ENCODE measurements at regions of chr1 and their contacts with region 1.

Region 1: DNA sequence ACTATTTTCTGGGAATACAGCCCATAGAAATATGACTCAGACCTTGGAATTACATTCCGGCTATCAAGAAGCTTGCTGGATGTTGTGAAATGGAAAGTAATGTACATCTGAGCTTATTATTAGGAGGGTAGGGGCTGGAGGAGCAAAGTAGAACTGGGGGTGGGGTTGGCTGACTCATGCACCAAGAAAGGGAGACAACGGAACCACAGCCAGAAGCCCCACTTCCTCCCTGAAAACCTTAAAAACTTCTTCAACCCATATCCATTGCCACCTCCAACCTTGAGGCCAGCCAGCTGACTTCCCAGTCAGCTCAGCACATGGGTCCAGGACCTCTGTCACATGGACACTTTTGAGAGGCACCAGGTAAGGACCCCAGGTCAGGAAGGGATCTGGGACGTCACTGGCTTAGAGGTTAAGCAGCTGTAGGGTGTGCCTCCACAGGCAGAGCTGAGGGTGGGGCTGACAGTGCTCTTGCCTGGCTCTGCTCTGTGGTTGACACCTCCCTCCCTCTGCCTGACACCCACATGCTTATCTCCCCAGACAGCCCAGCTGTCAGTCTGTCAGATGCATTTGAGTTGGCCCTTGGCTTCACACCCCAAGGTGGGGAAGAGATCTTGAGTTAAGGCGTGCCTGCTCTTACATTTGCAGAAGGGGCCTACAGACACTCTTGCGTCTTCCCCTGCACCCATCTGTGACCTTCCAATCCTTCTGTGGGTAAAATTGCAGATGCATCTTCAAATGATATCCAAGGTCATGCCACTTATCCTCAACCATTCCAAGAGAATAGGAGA is 5.7 kb upstream of the ZNF683 start:
- DNase-seq: peak; percentile 86 to 95 (median 90)
- H3K4me3 ChIP-seq: peak overlapping the region in 1 of 2 donors; percentile 32
- H3K4me3 Mint-ChIP-seq: peak overlapping the region; percentile 55 to 87 (median 74)
- H3K27ac ChIP-seq: peak overlapping the region; percentile 53
- H3K27ac Mint-ChIP-seq: peak overlapping the region; percentile 84 to 99 (median 96)
- H3K4me1 ChIP-seq: peaks cover 82% of the 10 kb centered on the region
- H3K4me1 Mint-ChIP-seq: peaks cover 53 to 92% (median 69%) of the 10 kb centered on the region in 4 donors
- H3K27me3 ChIP-seq: no peaks in the 10 kb centered on the region
- H3K27me3 Mint-ChIP-seq: no peaks in the 10 kb centered on the region

Region 2: GRCh38 chr1:26284597-26285360 is 93.5 kb before region 1 on chr1:
- CTCF ChIA-PET with region 1: interaction called, 33 read pairs
- POLR2A ChIA-PET with region 1: interaction called, 136 read pairs
- intact Hi-C with region 1: no loop called
- DNase-seq: peak; percentile 91 to 99 (median 92)
- H3K4me3 ChIP-seq: peak overlapping the region; percentile 38 to 50
- H3K4me3 Mint-ChIP-seq: peak overlapping the region; percentile 82 to 94 (median 89)
- H3K27ac ChIP-seq: peak overlapping the region; percentile 91
- H3K27ac Mint-ChIP-seq: peak overlapping the region; percentile 94 to 100 (median 99)
- H3K4me1 ChIP-seq: peaks cover 95% of the 10 kb centered on the region
- H3K4me1 Mint-ChIP-seq: peaks cover 63 to 96% (median 81%) of the 10 kb centered on the region in 4 donors
- H3K27me3 ChIP-seq: no peaks in the 10 kb centered on the region
- H3K27me3 Mint-ChIP-seq: no peaks in the 10 kb centered on the region

Region 3: GRCh38 chr1:26321315-26322041 is 56.8 kb before region 1 on chr1:
- CTCF ChIA-PET with region 1: interaction called, 23 read pairs
- POLR2A ChIA-PET with region 1: interaction called, 111 read pairs
- intact Hi-C with region 1: loop called (anchors 1 kb)
- DNase-seq: peak; percentile 88 to 95 (median 91)
- H3K4me3 ChIP-seq: peak overlapping the region in 1 of 2 donors; percentile 94
- H3K4me3 Mint-ChIP-seq: peak overlapping the region; percentile 91 to 100 (median 96)
- H3K27ac ChIP-seq: peak overlapping the region; percentile 69
- H3K27ac Mint-ChIP-seq: peak overlapping the region; percentile 83 to 99 (median 95)
- H3K4me1 ChIP-seq: peaks cover 48% of the 10 kb centered on the region
- H3K4me1 Mint-ChIP-seq: peaks cover 30 to 64% (median 47%) of the 10 kb centered on the region in 4 donors
- H3K27me3 ChIP-seq: no peaks in the 10 kb centered on the region
- H3K27me3 Mint-ChIP-seq: no peaks in the 10 kb centered on the region

Region 4: GRCh38 chr1:26358411-26359384 is 19.6 kb before region 1 on chr1:
- CTCF ChIA-PET with region 1: interaction called, 195 read pairs
- POLR2A ChIA-PET with region 1: interaction called, 174 read pairs
- intact Hi-C with region 1: loop called (anchors 1 kb)
- DNase-seq: peak; percentile 79 to 95 (median 81)
- H3K4me3 ChIP-seq: peak overlapping the region in 1 of 2 donors; percentile 44
- H3K4me3 Mint-ChIP-seq: peak overlapping the region; percentile 58 to 88 (median 74)
- H3K27ac ChIP-seq: peak overlapping the region; percentile 40
- H3K27ac Mint-ChIP-seq: peak overlapping the region; percentile 79 to 97 (median 94)
- H3K4me1 ChIP-seq: peaks cover 56% of the 10 kb centered on the region
- H3K4me1 Mint-ChIP-seq: peaks cover 27 to 70% (median 41%) of the 10 kb centered on the region in 4 donors
- H3K27me3 ChIP-seq: no peaks in the 10 kb centered on the region
- H3K27me3 Mint-ChIP-seq: no peaks in the 10 kb centered on the region

Region 5: DNA sequence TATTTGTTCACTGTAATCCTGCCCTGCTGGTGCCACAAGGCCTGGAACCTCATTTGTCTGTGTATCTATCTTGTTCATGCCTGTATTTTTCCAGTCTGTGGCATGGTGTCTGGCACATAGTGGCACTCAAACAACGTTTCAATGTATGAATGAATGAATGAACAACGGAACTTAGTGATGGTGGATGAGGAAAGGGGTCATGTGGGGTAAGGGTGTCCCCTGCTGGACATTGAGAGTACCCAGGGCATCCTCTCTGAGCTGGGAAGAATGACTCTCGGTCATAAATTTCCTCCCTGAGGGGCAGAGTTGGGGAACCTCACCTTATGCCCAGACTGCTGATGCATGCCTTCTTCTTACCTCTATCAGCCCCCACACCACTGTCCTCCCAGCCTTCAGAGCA is 13.2 kb after region 1 on chr1:
- CTCF ChIA-PET with region 1: interaction called, 73 read pairs
- POLR2A ChIA-PET with region 1: interaction called, 54 read pairs
- intact Hi-C with region 1: loop called (anchors 1 kb)
- DNase-seq: peak; percentile 52 to 63 (median 56)
- H3K4me3 ChIP-seq: no peak overlapping the region
- H3K4me3 Mint-ChIP-seq: peak overlapping the region in 2 of 8 donors; percentile 1 to 43
- H3K27ac ChIP-seq: no peak overlapping the region
- H3K27ac Mint-ChIP-seq: peak overlapping the region in 3 of 7 donors; percentile 51 to 75 (median 59)
- H3K4me1 ChIP-seq: peaks cover 42% of the 10 kb centered on the region
- H3K4me1 Mint-ChIP-seq: peaks cover 24 to 40% (median 28%) of the 10 kb centered on the region in 4 donors
- H3K27me3 ChIP-seq: no peaks in the 10 kb centered on the region
- H3K27me3 Mint-ChIP-seq: no peaks in the 10 kb centered on the region

Region 6: GRCh38 chr1:26408604-26409003 is 30.3 kb after region 1 on chr1:
- CTCF ChIA-PET with region 1: interaction called, 3 read pairs
- POLR2A ChIA-PET with region 1: interaction called, 4 read pairs
- intact Hi-C with region 1: loop called (anchors 2 kb)
- DNase-seq: peak; percentile 75 to 84 (median 78)
- H3K4me3 ChIP-seq: no peak overlapping the region
- H3K4me3 Mint-ChIP-seq: peak overlapping the region; percentile 23 to 79 (median 62)
- H3K27ac ChIP-seq: no peak overlapping the region
- H3K27ac Mint-ChIP-seq: peak overlapping the region in 2 of 7 donors; percentile 49 to 74
- H3K4me1 ChIP-seq: peaks cover 17% of the 10 kb centered on the region
- H3K4me1 Mint-ChIP-seq: peaks cover 9 to 24% (median 17%) of the 10 kb centered on the region in 4 donors
- H3K27me3 ChIP-seq: peaks cover 37% of the 10 kb centered on the region
- H3K27me3 Mint-ChIP-seq: peaks cover 32 to 42% of the 10 kb centered on the region in 2 donors

Region 7: GRCh38 chr1:26472901-26473845 is 94.9 kb after region 1 on chr1:
- CTCF ChIA-PET with region 1: no interaction called
- POLR2A ChIA-PET with region 1: interaction called, 3 read pairs
- intact Hi-C with region 1: loop called (anchors 1 kb)
- DNase-seq: peak; percentile 95 to 96 (median 95)
- H3K4me3 ChIP-seq: peak overlapping the region; percentile 53 to 85
- H3K4me3 Mint-ChIP-seq: peak overlapping the region; percentile 83 to 92 (median 89)
- H3K27ac ChIP-seq: peak overlapping the region; percentile 96
- H3K27ac Mint-ChIP-seq: peak overlapping the region; percentile 82 to 100 (median 93)
- H3K4me1 ChIP-seq: peaks cover 49% of the 10 kb centered on the region
- H3K4me1 Mint-ChIP-seq: peaks cover 33 to 66% (median 46%) of the 10 kb centered on the region in 4 donors
- H3K27me3 ChIP-seq: no peaks in the 10 kb centered on the region
- H3K27me3 Mint-ChIP-seq: no peaks in the 10 kb centered on the region

Region 8: DNA sequence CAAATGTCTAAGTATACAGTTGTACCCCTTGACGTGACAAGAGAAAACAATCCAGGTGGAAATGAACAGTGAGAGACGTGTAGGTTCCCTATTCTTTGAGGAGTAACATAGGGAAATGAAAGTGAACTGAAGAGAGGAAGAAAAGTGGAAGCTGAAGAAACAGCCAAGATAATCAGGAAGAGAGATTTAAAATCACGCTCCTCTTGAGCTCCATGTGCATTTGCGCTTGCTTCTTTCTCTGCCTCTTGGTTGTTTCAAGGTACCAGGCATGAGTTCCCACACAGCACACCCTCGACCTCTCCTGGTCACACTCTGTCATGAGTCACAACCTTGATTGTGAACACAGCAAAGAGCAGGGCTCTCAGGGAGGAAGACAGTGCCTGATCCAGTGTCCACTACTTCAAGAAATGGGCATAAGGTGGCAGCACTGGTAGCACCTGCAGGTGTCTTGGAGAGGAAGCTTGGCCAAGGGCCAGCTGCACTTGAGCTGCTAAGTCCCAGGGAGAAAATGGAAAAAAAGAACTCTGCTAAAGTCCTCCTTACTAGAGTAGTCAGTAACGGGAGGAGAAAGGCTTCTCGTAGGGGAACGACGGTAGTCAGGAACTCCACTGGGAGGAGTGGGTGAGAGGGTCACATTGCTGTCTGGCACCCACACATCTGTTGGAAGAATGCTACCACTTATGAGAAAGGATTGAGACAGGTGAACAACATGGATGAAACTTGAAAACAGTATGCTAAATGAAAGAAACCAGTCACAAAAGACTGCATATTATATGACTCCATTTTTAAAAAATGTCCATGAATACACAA is 299.2 kb after region 1 on chr1:
- CTCF ChIA-PET with region 1: no interaction called
- POLR2A ChIA-PET with region 1: no interaction called
- intact Hi-C with region 1: no loop called
- DNase-seq: peak; percentile 48 to 68 (median 54)
- H3K4me3 ChIP-seq: no peak overlapping the region
- H3K4me3 Mint-ChIP-seq: peak overlapping the region in 7 of 8 donors; percentile 36 to 82 (median 77)
- H3K27ac ChIP-seq: peak overlapping the region; percentile 5
- H3K27ac Mint-ChIP-seq: peak overlapping the region; percentile 24 to 89 (median 74)
- H3K4me1 ChIP-seq: peaks cover 20% of the 10 kb centered on the region
- H3K4me1 Mint-ChIP-seq: peaks cover 11 to 23% (median 14%) of the 10 kb centered on the region in 4 donors
- H3K27me3 ChIP-seq: no peaks in the 10 kb centered on the region
- H3K27me3 Mint-ChIP-seq: no peaks in the 10 kb centered on the region

Region 9: GRCh38 chr1:26838474-26839338 is 460.4 kb after region 1 on chr1:
- CTCF ChIA-PET with region 1: no interaction called
- POLR2A ChIA-PET with region 1: no interaction called
- intact Hi-C with region 1: no loop called
- DNase-seq: peak; percentile 62 to 92 (median 65)
- H3K4me3 ChIP-seq: no peak overlapping the region
- H3K4me3 Mint-ChIP-seq: peak overlapping the region in 7 of 8 donors; percentile 13 to 59 (median 42)
- H3K27ac ChIP-seq: peak overlapping the region; percentile 90
- H3K27ac Mint-ChIP-seq: peak overlapping the region; percentile 88 to 97 (median 94)
- H3K4me1 ChIP-seq: peaks cover 40% of the 10 kb centered on the region
- H3K4me1 Mint-ChIP-seq: peaks cover 24 to 47% (median 36%) of the 10 kb centered on the region in 4 donors
- H3K27me3 ChIP-seq: no peaks in the 10 kb centered on the region
- H3K27me3 Mint-ChIP-seq: no peaks in the 10 kb centered on the region

Measured in CD4-positive, alpha-beta memory T cell (primary cell).